ENCODE measurements at regions of chr15 and their contacts with region 1.

Region 1: DNA sequence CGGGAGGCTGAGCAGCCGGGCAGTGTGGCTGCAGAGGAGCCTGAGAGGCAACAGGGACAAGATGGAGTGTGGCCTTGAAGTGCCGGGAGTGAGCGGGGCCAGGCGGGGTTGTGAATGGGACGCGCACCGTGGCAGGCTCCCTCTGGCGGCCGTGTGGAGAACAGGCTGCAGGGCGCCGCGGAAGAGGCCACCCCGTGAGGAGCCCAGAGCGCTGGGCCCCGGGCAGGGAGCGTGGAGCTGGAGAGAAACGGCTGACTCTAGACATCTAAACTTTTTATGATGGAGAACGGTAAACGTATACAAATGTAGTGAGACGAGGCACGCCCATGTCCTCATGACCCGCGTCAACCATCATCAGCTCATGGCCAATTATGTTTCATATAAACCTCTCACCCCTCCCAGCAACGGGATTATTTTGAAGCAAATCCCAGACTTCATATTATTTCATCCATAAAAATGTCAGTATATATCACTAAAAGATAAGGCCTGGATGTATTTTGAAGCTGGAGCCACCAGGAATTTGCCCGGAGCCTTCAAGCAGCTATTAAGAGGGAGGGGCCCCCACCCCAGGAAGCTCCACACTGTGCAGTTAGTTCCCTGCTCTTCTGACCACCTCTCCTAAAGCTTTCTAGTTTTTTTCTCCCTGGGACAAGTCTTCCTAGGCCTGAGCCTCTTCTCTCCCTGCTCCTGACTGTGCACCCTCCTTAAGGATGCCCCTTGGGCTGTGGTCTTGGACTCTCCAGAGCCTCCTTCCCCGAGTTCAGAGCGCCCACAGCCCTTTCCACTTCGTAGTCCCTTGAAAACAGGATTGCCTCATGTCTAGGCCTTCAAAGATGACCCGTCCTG is 149.4 kb downstream of the SMAD6 start:
- DNase-seq: peak; percentile 73 to 84 (median 83)
- H3K4me3 ChIP-seq: peak overlapping the region in 3 of 7 experiments; percentile 39 to 48 (median 45)
- H3K27ac ChIP-seq: no peak overlapping the region
- H3K4me1 ChIP-seq: peaks cover 0 to 15% (median 5%) of the 10 kb centered on the region in 4 experiments
- H3K27me3 ChIP-seq: peaks cover 0 to 5% (median 0%) of the 10 kb centered on the region in 5 experiments

Region 2: DNA sequence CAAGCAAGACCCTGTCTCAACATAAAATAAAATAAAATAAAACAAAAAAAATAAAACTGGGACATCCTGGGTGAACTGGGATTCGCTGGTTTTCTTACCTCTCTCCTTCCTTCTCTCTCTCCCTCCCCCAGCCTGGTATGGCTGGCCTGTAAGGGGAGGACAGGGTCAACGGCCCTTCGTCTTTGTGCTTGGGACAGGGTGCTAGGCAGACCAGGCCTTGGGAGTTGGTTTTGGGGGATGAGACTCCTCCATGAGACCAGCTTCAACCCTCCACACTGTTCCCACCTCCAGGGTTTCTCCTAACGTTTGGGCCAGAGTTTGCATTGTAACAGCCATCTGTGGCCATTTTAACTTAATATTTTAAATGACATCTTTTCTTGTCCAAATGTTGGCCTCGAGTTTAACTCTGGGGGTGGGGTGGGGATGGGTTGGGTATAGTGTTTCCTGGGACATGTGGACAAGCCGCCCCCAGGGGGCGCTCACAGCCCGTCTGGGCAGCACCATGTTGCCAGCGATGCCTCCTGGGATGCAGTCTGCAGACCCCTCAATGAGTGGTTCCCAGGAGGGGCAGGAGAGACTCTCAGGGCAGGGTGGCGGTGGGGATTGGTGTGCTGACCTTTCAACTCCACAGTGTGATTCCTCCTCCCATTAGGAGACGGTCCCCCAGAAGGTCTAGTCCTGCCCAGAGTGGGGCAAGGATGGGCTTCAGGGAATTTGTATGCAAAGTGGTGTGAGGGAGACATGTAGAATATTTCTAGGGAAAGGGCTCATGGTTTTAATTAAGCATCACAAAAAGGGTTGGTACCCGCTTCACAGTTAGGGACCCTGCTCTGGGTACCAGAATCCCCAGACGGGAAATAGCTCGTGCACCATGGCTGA is 247.9 kb before region 1 on chr15:
- CTCF ChIA-PET with region 1: interaction called, 17 read pairs
- POLR2A ChIA-PET with region 1: interaction called, 5 read pairs
- DNase-seq: peak; percentile 76 to 87 (median 77)
- H3K4me3 ChIP-seq: no peak overlapping the region
- H3K27ac ChIP-seq: no peak overlapping the region
- H3K4me1 ChIP-seq: peaks cover 0 to 14% (median 0%) of the 10 kb centered on the region in 4 experiments
- H3K27me3 ChIP-seq: no peaks in the 10 kb centered on the region

Region 3: DNA sequence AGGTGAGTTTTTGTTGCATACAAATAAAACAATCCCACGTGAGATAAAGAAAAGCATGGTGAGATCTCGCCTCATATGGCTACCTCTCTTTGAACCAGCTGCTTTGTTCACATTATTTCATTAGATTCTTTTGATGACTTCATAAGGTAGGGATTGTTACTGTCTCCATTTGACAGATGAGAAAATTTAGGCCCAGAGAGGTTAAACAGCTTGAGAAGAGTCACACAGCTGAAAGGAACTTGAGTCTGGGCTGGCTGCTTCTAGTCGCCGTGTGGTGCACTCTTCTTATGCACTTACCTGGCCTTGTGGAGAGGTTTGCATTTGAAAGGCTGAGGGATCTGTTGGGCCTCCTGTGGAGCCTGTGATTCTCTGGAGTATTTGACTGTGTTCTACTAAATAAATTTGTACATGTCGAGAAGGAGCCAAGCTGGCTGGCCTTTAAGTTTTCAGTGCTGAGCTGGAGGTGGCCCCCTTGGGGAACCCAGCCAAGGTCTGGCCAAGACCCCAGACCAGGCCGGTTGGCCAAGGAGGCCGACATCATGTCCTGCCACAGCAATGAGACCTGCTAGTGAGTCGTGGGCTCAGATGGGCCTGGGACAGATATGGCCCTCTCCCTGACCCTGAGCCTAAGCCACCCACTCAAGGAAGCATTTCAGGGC is 24.3 kb before region 1 on chr15:
- CTCF ChIA-PET with region 1: no interaction called
- POLR2A ChIA-PET with region 1: no interaction called
- DNase-seq: no peak
- H3K4me3 ChIP-seq: no peak overlapping the region
- H3K27ac ChIP-seq: no peak overlapping the region
- H3K4me1 ChIP-seq: no peaks in the 10 kb centered on the region
- H3K27me3 ChIP-seq: no peaks in the 10 kb centered on the region

Region 4: DNA sequence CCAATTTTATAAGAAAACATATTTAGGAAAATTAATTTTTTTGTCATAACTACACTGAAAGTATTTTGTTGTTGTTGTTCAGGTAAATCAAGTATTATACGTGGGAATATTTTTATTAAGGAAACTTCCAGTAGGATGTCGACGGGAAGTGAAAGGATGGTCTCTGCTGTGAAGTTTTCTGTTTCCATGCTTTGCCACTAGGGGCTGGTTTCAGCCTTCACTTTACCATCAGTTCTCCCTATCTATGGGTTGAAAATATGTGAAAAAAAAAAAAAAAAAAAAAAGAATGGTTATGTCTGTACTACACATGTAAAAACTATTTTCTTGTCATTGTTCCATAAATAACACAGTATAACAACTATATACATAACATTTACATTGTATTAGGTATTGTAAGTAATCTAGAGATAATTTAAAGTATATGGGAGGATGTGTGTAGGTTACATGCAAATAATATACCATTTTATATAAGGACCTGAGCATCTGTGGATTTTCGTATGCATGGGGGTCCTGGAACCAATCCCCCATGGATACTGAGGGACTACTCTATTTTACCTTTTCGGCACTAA is 12.7 kb before region 1 on chr15:
- CTCF ChIA-PET with region 1: interaction called, 17 read pairs
- POLR2A ChIA-PET with region 1: no interaction called
- DNase-seq: peak in 2 of 3 donors; percentile 31 to 37
- H3K4me3 ChIP-seq: no peak overlapping the region
- H3K27ac ChIP-seq: no peak overlapping the region
- H3K4me1 ChIP-seq: peaks cover 0 to 18% (median 10%) of the 10 kb centered on the region in 4 experiments
- H3K27me3 ChIP-seq: peaks cover 0 to 13% (median 1%) of the 10 kb centered on the region in 5 experiments

Region 5: GRCh38 chr15:66862878-66863335 is 11.5 kb after region 1 on chr15:
- CTCF ChIA-PET with region 1: interaction called, 28 read pairs
- POLR2A ChIA-PET with region 1: no interaction called
- DNase-seq: peak; percentile 84 to 90 (median 86)
- H3K4me3 ChIP-seq: no peak overlapping the region
- H3K27ac ChIP-seq: no peak overlapping the region
- H3K4me1 ChIP-seq: peaks cover 0 to 13% (median 11%) of the 10 kb centered on the region in 4 experiments
- H3K27me3 ChIP-seq: no peaks in the 10 kb centered on the region

Measured in common myeloid progenitor, CD34-positive (primary cell).